ENCODE measurements at regions of chr19 and their contacts with region 1.

Region 1: GRCh38 chr19:58305065-58305931 is at the start of gene ERVK3-1:
- DNase-seq: peak; percentile 89 to 99 (median 93)
- ATAC-seq: peak; percentile 96
- H3K4me3 ChIP-seq: peak within 1 kb of the TSS; percentile 82 to 89
- H3K4me3 Mint-ChIP-seq: peak within 1 kb of the TSS; percentile 98
- H3K27ac ChIP-seq: peak within 1 kb of the TSS; percentile 93 to 95
- H3K27ac Mint-ChIP-seq: peak within 1 kb of the TSS; percentile 99
- H3K4me1 ChIP-seq: peaks cover 27% of the 10 kb centered on the region
- H3K4me1 Mint-ChIP-seq: peaks cover 53% of the 10 kb centered on the region
- H3K27me3 ChIP-seq: no peaks in the 10 kb centered on the region
- H3K27me3 Mint-ChIP-seq: no peaks in the 10 kb centered on the region
- CTCF ChIP-seq: no peak
- total RNA-seq, gene ERVK3-1: 174 to 182 TPM

Region 2: DNA sequence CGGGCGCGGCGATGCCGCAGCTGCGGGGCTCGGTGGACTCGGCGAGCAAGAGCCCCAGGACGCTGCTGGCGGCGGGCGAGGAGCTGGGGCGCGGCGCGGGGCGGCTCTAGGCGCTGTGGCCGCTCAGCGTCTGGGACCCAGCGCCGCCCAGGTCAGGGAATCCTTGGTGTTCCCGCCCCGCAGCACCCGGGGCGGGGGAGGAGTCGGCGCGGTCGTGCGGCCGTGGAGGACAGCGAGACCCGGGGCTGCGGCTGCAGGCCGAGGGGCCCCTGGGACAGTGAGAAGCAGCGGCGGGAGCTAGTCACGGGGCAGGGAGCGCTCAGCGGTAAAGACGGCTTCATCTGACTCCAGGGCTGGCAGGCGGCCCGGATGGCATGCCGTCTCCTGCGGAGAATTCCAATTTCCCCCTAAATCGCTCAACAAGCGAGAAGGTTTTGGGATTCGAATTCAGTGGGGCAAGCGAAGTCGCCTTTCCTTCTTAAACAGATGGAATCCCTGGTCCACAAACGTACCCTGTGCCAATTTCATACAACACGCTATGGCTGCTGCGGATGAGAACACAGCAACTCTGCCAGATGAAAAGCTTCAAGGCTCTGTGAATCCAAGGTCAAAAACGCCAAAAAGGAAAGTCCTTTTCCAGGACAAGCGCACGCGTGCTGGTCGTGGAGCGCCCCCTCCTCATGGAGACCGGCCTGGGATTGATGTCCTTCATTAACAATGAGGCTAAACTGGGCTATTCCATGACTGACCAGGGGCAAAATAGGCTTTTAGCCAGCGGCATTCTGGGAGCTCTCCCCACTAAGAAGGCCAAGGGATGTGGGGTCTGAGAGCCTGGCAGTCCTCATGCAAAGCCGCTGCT is 640.8 kb before region 1 on chr19:
- CTCF ChIA-PET with region 1: no interaction called
- POLR2A ChIA-PET with region 1: no interaction called
- intact Hi-C with region 1: no loop called
- DNase-seq: peak in 2 of 9 experiments; percentile 4 to 7
- ATAC-seq: peak; percentile 40
- H3K4me3 ChIP-seq: peak overlapping the region in 1 of 2 experiments; percentile 35
- H3K4me3 Mint-ChIP-seq: peak overlapping the region; percentile 74
- H3K27ac ChIP-seq: no peak overlapping the region
- H3K27ac Mint-ChIP-seq: no peak overlapping the region
- H3K4me1 ChIP-seq: peaks cover 5% of the 10 kb centered on the region
- H3K4me1 Mint-ChIP-seq: peaks cover 9% of the 10 kb centered on the region
- H3K27me3 ChIP-seq: peaks cover 16 to 22% of the 10 kb centered on the region in 2 experiments
- H3K27me3 Mint-ChIP-seq: peaks cover 49% of the 10 kb centered on the region
- CTCF ChIP-seq: no peak

Region 3: DNA sequence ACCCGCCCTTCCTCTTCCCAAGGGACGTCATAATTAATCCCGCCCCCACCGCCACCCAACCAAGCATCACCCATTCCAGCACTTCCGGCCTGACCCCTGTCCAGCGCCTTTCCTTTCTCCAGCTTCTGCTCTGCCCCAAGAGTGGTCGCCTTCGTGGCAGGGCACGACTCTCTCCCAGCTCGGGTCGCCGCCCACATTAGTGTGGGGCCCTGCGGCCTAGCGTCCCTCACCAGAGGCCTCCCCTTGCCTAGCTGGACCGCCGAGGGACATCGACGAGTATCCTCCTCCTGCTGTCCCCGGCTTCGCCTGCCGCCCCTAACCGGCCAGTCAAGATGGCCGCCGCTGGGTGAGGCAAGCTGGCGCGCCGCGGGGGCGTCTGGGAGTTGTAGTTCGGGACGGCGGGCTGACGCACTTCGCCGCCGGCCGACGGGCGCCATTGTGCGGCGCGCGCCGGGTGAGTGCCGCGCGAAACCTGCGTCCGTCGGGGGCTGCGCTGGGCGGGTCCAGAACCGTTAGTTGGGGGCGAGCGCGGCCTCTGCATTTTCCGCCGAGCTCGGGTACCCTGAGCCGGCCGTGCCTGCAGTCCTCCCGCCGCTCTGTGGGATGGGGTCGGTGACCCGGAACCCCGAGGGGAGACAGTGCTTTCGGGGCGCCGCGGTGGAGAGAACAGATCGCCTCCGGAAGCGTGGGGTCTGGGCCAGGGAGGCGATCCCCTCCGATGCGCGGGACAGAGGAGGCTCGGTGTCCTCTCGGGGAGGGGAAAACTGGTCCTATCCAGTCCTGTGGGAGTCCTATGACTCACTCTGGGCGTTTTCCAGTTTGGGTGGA is 122.1 kb before region 1 on chr19 and contains the start of gene ZNF274:
- CTCF ChIA-PET with region 1: no interaction called
- POLR2A ChIA-PET with region 1: interaction called, 5 read pairs
- intact Hi-C with region 1: loop called (anchors 1 kb)
- DNase-seq: peak; percentile 88 to 96 (median 94)
- ATAC-seq: peak; percentile 86
- H3K4me3 ChIP-seq: peak within 1 kb of the TSS; percentile 90 to 94
- H3K4me3 Mint-ChIP-seq: peak within 1 kb of the TSS; percentile 91
- H3K27ac ChIP-seq: peak within 1 kb of the TSS; percentile 99 to 100
- H3K27ac Mint-ChIP-seq: peak within 1 kb of the TSS; percentile 100
- H3K4me1 ChIP-seq: peaks cover 9% of the 10 kb centered on the region
- H3K4me1 Mint-ChIP-seq: peaks cover 22% of the 10 kb centered on the region
- H3K27me3 ChIP-seq: no peaks in the 10 kb centered on the region
- H3K27me3 Mint-ChIP-seq: no peaks in the 10 kb centered on the region
- CTCF ChIP-seq: no peak
- total RNA-seq, gene ZNF274: 52.7 to 58.9 TPM

Region 4: DNA sequence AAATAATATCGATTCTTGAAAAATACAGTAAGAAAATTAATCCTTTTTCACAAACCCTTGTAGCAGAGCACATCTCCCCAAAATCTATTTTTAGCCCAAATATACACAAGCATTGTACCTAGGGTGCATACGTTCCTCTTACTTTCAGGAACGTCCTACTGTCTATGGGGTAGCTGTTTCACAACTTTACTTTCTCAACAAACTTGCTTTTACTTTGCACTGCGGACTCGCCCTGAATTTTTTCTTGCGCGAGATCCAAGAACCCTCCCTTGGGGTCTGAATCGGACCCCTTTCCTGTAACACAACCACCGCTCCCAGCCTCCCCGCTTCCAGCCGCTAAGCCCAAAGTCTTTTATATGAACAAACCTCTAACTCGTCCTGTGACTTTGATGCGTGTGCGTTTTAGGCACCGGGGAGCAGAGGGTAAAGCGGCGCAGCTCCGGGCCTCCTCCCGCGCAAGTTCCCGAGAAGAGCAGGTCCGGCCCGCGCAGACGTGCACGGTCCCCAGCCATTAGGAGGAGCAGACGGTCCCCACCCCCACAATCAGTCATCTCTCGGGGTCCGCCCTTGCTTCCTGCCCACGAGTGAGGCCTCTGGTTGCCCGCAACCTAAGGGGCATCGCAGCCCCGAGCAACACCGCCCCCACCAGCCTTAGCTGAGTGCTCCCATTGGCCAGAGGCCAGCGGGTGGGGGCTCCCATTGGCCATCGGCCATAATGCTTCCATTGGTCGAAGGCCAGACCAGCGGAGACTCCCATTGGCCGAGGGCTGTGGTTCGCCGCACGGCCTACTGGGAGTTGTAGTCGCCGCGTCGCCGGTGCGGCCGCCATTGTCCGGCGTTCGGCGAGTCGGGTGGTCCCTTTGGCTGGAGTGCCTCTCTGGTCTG is 26.9 kb before region 1 on chr19 and contains the start of gene ZNF8:
- CTCF ChIA-PET with region 1: no interaction called
- POLR2A ChIA-PET with region 1: interaction called, 4 read pairs
- intact Hi-C with region 1: loop called (anchors 1 kb)
- DNase-seq: peak; percentile 89 to 99 (median 97)
- ATAC-seq: peak; percentile 97
- H3K4me3 ChIP-seq: peak within 1 kb of the TSS; percentile 67 to 92
- H3K4me3 Mint-ChIP-seq: peak within 1 kb of the TSS; percentile 99
- H3K27ac ChIP-seq: peak within 1 kb of the TSS; percentile 72 to 85
- H3K27ac Mint-ChIP-seq: peak within 1 kb of the TSS; percentile 96
- H3K4me1 ChIP-seq: peaks cover 26% of the 10 kb centered on the region
- H3K4me1 Mint-ChIP-seq: peaks cover 50% of the 10 kb centered on the region
- H3K27me3 ChIP-seq: no peaks in the 10 kb centered on the region
- H3K27me3 Mint-ChIP-seq: no peaks in the 10 kb centered on the region
- CTCF ChIP-seq: no peak
- total RNA-seq, gene ZNF8: 9.2 to 9.5 TPM

Region 5: DNA sequence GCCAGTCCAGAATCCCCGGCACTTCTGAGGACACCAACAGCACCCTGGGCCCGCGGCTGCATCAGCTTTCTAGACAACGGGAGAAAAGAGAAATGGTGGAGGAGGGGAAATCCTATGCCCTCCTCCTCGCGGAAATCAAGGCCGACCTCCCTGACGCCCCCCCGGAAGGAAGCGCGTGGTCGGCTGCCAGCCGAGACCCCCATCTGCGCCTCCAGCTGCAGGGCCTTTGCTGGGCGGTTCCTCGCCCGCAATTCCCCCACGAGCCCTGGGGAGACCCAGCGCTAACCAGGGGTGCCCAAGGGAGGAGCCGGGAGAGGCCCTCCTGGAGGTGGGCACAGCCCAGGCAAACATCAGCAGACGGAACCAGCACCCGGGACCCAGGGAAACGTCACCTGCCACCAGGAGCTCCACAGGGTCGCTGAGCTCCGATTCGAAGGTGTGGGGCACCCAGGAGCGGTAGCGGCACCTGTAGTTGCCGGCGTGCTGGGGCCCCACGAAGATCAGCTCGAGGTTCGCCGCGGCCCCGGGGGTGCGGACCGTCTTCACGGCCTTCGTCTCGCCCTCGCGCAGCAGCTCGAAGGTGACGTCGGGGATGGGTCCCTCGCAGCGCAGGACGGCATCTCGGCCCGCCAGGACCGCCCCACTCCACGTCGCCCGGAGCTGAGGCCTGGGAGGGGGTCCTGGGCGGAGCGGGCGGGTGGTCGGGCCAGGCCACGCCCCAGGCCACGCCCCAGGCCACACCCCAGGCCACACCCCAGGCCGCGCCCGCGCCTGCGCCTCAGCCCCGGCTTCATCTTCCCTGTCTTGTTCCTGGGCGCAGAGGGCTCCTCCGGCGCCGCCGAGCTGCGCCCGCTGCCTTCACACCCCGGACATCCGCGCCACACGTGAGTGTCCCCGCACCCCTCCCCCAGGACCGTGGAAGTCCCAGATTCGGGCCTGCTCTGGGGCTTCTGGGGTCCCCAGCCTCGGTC is 41.9 kb after region 1 on chr19:
- CTCF ChIA-PET with region 1: no interaction called
- POLR2A ChIA-PET with region 1: interaction called, 4 read pairs
- intact Hi-C with region 1: loop called in 1 of 2 experiments (anchors 1 kb)
- DNase-seq: peak; percentile 41 to 86 (median 71)
- ATAC-seq: peak; percentile 90
- H3K4me3 ChIP-seq: peak overlapping the region; percentile 72 to 95
- H3K4me3 Mint-ChIP-seq: peak overlapping the region; percentile 91
- H3K27ac ChIP-seq: peak overlapping the region; percentile 63 to 85
- H3K27ac Mint-ChIP-seq: peak overlapping the region; percentile 93
- H3K4me1 ChIP-seq: peaks cover 17% of the 10 kb centered on the region
- H3K4me1 Mint-ChIP-seq: peaks cover 35% of the 10 kb centered on the region
- H3K27me3 ChIP-seq: no peaks in the 10 kb centered on the region
- H3K27me3 Mint-ChIP-seq: no peaks in the 10 kb centered on the region
- CTCF ChIP-seq: no peak

Region 6: GRCh38 chr19:58466760-58467589 is 161.7 kb after region 1 on chr19 and contains the start of gene ZNF324:
- CTCF ChIA-PET with region 1: no interaction called
- POLR2A ChIA-PET with region 1: no interaction called
- intact Hi-C with region 1: loop called in 1 of 2 experiments (anchors 1 kb)
- DNase-seq: peak; percentile 93 to 99 (median 98)
- ATAC-seq: peak; percentile 88
- H3K4me3 ChIP-seq: peak within 1 kb of the TSS; percentile 63 to 93
- H3K4me3 Mint-ChIP-seq: peak within 1 kb of the TSS; percentile 87
- H3K27ac ChIP-seq: peak within 1 kb of the TSS; percentile 88 to 91
- H3K27ac Mint-ChIP-seq: peak within 1 kb of the TSS; percentile 89
- H3K4me1 ChIP-seq: peaks cover 10% of the 10 kb centered on the region
- H3K4me1 Mint-ChIP-seq: peaks cover 25% of the 10 kb centered on the region
- H3K27me3 ChIP-seq: peaks cover 0 to 3% of the 10 kb centered on the region in 2 experiments
- H3K27me3 Mint-ChIP-seq: no peaks in the 10 kb centered on the region
- CTCF ChIP-seq: no peak
- total RNA-seq, gene ZNF324: 26.9 to 30.5 TPM

Region 7: DNA sequence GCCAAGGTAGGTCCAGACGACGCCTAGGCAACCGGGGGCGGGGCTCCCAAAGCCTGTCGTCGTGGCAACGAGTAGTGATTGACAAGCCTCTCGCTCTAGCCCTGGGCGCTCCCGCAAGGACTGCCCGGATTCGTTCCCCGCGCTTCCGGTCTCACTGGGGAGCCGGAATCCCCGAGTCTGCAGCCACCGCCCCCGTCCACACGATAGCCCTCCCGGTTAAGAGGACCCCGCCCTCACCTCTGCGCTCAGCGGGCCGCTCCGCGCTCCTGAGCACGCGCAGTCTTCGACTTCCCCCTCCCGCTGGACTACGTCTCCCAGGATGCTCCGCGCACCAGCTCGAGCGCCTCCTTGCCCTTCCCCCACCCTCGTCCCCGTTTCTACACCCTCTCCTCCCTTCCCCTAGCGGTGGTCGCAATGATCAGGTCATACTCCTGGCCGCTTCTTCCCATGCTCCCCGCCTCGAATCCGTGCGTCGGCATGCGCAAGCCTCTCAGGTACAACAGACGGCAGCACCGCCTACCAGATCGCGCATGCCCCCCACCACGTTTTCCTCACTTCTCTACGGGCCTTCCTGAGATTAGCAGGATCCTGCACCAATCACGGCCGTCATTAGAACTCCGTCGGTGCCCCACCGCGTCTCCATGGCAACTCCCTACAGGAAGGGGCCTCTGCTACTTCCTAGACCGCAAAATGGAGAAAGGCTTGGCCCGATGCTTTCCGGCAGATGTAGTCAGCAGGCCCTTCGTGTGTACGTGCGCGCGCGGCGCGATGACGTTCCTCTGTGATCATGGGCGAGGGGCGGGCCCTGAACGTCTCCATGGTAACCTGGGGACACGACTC is 267.7 kb after region 1 on chr19 and contains the start of gene MZF1:
- CTCF ChIA-PET with region 1: interaction called, 4 read pairs
- POLR2A ChIA-PET with region 1: no interaction called
- intact Hi-C with region 1: loop called (anchors 1 kb)
- DNase-seq: peak; percentile 99 to 100 (median 99)
- ATAC-seq: peak; percentile 70
- H3K4me3 ChIP-seq: peak within 1 kb of the TSS; percentile 83 to 84
- H3K4me3 Mint-ChIP-seq: peak within 1 kb of the TSS; percentile 98
- H3K27ac ChIP-seq: peak within 1 kb of the TSS; percentile 98 to 100
- H3K27ac Mint-ChIP-seq: peak within 1 kb of the TSS; percentile 99
- H3K4me1 ChIP-seq: peaks cover 22% of the 10 kb centered on the region
- H3K4me1 Mint-ChIP-seq: peaks cover 30% of the 10 kb centered on the region
- H3K27me3 ChIP-seq: no peaks in the 10 kb centered on the region
- H3K27me3 Mint-ChIP-seq: no peaks in the 10 kb centered on the region
- CTCF ChIP-seq: no peak
- total RNA-seq, gene MZF1: 14.1 to 15.0 TPM